Esophagus muscularis mucosa (tissue), 4 donors: ENCODE measurements at regions of chr4 and their contacts with region 1.

Region 1: GRCh38 chr4:88523325-88524129 is at the start of gene PYURF:
- DNase-seq: peak; percentile 99
- H3K4me3 ChIP-seq: peak within 1 kb of the TSS; percentile 83 to 86 (median 84)
- H3K27ac ChIP-seq: peak within 1 kb of the TSS; percentile 89 to 96 (median 94)
- H3K4me1 ChIP-seq: peaks cover 13 to 45% (median 41%) of the 10 kb centered on the region in 4 donors
- H3K27me3 ChIP-seq: no peaks in the 10 kb centered on the region
- CTCF ChIP-seq: peak in 1 of 3 experiments; percentile 7
- EP300 ChIP-seq: no peak
- POLR2A ChIP-seq: peak; percentile 66
- total RNA-seq, gene PYURF: 65.2 to 95.9 (median 80.3) TPM

Region 2: GRCh38 chr4:88007304-88008121 is 516.0 kb before region 1 on chr4 and contains the start of gene PKD2:
- intact Hi-C with region 1: loop called (anchors 10 kb)
- DNase-seq: no peak
- H3K4me3 ChIP-seq: peak within 1 kb of the TSS; percentile 95 to 97 (median 96)
- H3K27ac ChIP-seq: peak within 1 kb of the TSS; percentile 93 to 96 (median 94)
- H3K4me1 ChIP-seq: peaks cover 31 to 59% (median 55%) of the 10 kb centered on the region in 4 donors
- H3K27me3 ChIP-seq: no peaks in the 10 kb centered on the region
- CTCF ChIP-seq: no peak
- EP300 ChIP-seq: no peak
- POLR2A ChIP-seq: peak; percentile 26
- total RNA-seq, gene PKD2: 79.1 to 128 (median 92.5) TPM

Region 3: GRCh38 chr4:88284439-88285234 is 238.9 kb before region 1 on chr4 and contains the start of gene PPM1K:
- intact Hi-C with region 1: loop called (anchors 5 kb)
- DNase-seq: peak; percentile 100
- H3K4me3 ChIP-seq: peak within 1 kb of the TSS; percentile 75 to 96 (median 82)
- H3K27ac ChIP-seq: peak within 1 kb of the TSS; percentile 97 to 100 (median 99)
- H3K4me1 ChIP-seq: peaks cover 22 to 55% (median 46%) of the 10 kb centered on the region in 4 donors
- H3K27me3 ChIP-seq: no peaks in the 10 kb centered on the region
- CTCF ChIP-seq: peak; percentile 14 to 29 (median 19)
- EP300 ChIP-seq: no peak
- POLR2A ChIP-seq: peak; percentile 27
- total RNA-seq, gene PPM1K: 35.7 to 54.2 (median 38.3) TPM

Region 4: DNA sequence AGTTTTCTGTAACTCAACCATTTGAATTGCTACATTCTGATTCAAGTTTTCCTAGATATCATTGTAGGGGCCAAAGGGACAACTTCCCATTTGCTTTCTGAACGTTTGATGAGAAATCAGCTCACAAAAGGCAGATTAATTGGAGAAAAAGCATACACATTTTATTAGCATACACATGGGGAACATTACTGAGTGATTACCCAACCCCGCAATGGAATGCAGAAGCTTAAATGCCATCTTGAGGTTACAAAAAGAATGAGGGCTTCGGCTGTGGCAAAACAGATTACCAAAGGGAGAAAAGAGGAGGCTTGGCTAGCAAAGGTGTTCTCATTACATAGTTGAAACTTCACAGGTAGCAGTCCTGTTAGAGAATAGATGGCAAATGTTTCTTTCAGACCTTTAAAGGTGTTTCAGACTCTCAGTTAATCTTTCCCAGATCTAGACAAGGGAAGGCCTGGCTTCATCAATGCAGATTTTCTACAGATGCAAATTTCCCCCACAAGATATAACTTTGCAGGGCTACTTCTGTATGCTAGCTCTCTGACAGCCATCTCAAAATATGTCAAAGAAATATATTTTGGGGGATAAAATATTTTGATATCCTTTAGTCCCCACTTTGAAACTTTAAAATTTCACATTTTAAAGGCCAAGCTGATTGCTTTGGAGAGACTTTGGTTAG is 171.3 kb before region 1 on chr4:
- intact Hi-C with region 1: no loop called
- DNase-seq: peak; percentile 26
- H3K4me3 ChIP-seq: no peak overlapping the region
- H3K27ac ChIP-seq: no peak overlapping the region
- H3K4me1 ChIP-seq: no peaks in the 10 kb centered on the region
- H3K27me3 ChIP-seq: no peaks in the 10 kb centered on the region
- CTCF ChIP-seq: no peak
- EP300 ChIP-seq: no peak
- POLR2A ChIP-seq: no peak

Region 5: GRCh38 chr4:88456757-88457306 is 66.7 kb before region 1 on chr4 and contains the start of gene HERC5:
- intact Hi-C with region 1: loop called (anchors 5 kb)
- DNase-seq: peak; percentile 96
- H3K4me3 ChIP-seq: peak within 1 kb of the TSS; percentile 77 to 90 (median 81)
- H3K27ac ChIP-seq: peak within 1 kb of the TSS; percentile 71 to 91 (median 85)
- H3K4me1 ChIP-seq: peaks cover 0 to 17% (median 14%) of the 10 kb centered on the region in 4 donors
- H3K27me3 ChIP-seq: no peaks in the 10 kb centered on the region
- CTCF ChIP-seq: peak; percentile 68 to 70 (median 68)
- EP300 ChIP-seq: no peak
- POLR2A ChIP-seq: no peak
- total RNA-seq, gene HERC5: 2.9 to 4.5 (median 3.9) TPM

Region 6: DNA sequence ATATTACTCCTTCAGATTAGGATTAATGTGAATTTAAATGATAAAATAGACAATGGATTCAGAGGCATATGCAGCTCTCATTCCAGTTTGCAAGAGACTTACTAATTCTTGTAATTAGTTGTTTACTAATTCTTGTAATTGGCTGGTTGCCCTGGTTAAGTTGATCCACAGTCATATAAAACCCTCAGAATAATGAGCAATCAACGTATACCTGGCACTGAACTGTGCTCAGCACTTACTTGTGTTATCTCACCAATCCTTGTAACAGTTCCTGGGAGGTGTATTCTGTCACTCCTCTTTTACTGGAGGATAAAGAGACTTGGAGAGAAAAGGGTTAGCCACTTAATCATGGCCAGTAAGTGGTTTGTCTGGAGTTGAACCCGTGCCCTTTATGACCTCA is 56.1 kb before region 1 on chr4:
- intact Hi-C with region 1: no loop called
- DNase-seq: no peak
- H3K4me3 ChIP-seq: no peak overlapping the region
- H3K27ac ChIP-seq: no peak overlapping the region
- H3K4me1 ChIP-seq: no peaks in the 10 kb centered on the region
- H3K27me3 ChIP-seq: no peaks in the 10 kb centered on the region
- CTCF ChIP-seq: no peak
- EP300 ChIP-seq: no peak
- POLR2A ChIP-seq: no peak

Region 7: DNA sequence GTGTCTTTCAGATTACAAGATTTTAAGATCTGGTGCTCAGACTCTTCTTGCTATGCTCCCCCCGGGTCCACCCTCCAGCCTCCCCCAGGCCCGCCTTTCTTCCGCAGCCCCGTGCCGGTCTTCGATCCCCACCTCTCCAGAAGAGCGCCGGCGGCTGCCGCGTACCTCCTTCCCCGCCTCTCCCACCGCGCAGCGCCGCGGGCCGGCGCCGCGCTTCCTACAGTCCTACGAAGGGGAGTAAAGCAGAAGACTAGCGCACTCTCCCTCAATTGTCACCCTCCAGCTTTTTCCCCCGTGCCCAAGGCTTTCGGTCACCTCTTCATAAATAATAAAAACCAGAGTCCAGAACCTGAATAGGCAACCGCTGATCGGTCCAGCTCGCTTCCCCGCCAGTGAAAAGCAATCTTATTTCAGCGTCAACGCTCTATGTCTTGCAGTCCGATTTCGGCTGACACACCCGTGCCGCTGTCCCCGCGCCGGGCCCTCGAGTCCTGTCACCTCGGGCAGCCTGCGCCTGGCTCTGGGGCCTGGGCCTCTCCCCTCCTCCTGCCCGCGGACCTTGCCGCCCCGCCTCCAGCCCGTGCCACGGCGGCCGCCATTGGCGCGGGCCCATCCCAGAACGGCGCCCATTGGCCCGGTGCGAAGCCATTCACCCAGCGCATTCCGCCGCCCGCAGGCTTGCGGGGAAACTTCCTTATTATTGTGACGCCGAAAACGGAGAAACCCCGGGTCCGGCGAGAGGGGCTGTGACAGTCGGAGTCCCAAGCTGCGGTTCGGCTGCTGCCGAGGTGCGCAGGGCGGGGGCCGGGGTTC is 68.5 kb after region 1 on chr4 and contains the start of gene HERC3:
- intact Hi-C with region 1: loop called (anchors 5 kb)
- DNase-seq: peak; percentile 97
- H3K4me3 ChIP-seq: peak within 1 kb of the TSS; percentile 83 to 97 (median 91)
- H3K27ac ChIP-seq: peak within 1 kb of the TSS; percentile 96 to 99 (median 98)
- H3K4me1 ChIP-seq: peaks cover 10 to 51% (median 37%) of the 10 kb centered on the region in 4 donors
- H3K27me3 ChIP-seq: no peaks in the 10 kb centered on the region
- CTCF ChIP-seq: peak in 1 of 3 experiments; percentile 29
- EP300 ChIP-seq: no peak
- POLR2A ChIP-seq: peak; percentile 6
- total RNA-seq, gene HERC3: 39.8 to 58.2 (median 51.2) TPM